HEK293T (cell line): ENCODE measurements at regions of chr19 and their contacts with region 1.

Region 1: GRCh38 chr19:45323671-45324081 is 1.0 kb upstream of the CKM start:
- DNase-seq: no peak

Region 2: DNA sequence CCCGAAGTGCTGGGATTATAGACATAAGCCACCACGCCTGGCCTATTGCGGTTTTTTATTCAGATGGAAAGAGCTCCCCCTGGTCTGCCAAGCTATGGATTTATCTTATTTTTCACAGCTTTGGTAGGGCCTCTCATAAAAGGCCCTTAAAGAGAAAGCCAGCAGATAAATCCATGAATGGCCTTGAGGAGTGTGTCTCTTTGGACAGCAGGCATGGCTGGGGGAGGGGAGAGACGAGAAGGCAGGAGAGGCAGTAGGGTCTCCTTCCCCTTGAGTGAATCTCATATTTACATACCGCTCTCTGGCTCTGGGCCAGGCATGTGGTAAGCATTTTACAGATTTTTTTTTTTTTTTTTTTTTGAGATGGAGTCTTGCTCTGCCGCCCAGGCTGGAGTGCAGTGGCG is 47.4 kb before region 1 on chr19:
- CTCF ChIA-PET with region 1: no interaction called
- POLR2A ChIA-PET with region 1: no interaction called
- DNase-seq: no peak

Region 3: GRCh38 chr19:45299719-45300118 is 24.0 kb before region 1 on chr19:
- CTCF ChIA-PET with region 1: no interaction called
- POLR2A ChIA-PET with region 1: interaction called, 10 read pairs
- DNase-seq: no peak

Region 4: DNA sequence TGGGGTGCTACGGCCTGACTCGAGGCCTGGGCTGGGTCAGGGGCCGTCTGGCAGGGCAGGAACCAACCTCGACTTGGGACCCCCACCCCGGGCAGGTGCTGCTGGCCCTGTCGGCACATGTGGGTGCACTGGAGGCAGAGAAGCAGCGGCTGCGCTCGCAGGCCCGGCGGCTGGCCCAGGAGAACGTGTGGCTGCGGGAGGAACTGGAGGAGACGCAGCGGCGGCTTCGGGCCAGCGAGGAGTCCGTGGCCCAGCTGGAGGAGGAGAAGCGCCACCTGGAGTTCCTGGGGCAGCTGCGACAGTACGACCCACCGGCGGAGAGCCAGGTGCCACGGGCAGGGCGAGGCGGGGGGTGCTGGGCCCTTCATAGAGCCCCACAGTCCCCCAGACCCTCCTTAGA is 22.8 kb after region 1 on chr19:
- CTCF ChIA-PET with region 1: no interaction called
- POLR2A ChIA-PET with region 1: no interaction called
- DNase-seq: no peak